ENCODE measurements at regions of chr17 and their contacts with region 1.

Region 1: DNA sequence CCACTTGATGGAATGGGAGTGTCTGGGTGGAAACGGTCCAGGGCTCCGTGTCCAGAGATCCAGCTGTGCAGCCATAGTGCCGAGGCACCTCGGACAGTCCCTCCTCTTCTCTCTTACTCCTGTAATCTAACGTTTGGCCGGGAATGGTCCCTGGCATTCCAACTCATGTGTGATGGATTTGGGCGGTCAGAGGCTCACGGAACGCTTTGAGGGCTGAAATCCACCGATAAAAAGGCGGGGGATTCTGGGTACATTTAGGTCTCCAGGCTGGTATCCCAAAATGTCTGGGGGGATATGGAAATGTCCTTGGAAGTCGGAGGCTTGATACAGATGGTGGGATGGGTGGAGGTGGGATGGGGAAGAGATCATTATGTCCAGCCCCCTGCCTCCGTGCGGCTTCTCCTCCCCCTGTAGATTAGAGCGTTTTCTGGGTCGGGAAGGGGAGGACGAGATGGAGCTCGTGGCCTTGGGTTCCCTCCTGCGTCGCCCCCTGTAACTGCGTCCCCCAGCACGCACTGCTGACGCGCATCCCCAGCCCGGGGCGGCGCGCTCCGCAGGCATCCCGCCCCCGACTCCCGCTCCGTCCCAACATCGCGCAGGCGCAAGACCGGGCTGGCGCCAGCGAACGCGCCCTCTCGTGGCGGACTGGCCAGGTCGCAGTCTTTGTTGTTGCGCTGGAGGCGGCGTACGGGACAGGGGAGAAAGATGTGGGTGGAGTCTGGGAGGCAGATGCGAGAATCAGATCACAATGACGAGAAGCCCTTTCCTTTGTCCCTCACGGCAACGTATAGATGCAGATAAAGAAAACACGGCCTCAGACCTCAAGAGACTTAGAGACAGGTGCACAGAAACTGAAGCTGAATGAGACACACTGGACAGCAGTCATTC is 4.5 kb upstream of the SGCA start:
- DNase-seq: peak; percentile 97
- H3K4me3 Mint-ChIP-seq: peak overlapping the region; percentile 75
- H3K27ac Mint-ChIP-seq: peak overlapping the region; percentile 6
- H3K4me1 Mint-ChIP-seq: peaks cover 18% of the 10 kb centered on the region
- H3K27me3 Mint-ChIP-seq: peaks cover 59% of the 10 kb centered on the region
- CTCF ChIP-seq: peak; percentile 81

Region 2: DNA sequence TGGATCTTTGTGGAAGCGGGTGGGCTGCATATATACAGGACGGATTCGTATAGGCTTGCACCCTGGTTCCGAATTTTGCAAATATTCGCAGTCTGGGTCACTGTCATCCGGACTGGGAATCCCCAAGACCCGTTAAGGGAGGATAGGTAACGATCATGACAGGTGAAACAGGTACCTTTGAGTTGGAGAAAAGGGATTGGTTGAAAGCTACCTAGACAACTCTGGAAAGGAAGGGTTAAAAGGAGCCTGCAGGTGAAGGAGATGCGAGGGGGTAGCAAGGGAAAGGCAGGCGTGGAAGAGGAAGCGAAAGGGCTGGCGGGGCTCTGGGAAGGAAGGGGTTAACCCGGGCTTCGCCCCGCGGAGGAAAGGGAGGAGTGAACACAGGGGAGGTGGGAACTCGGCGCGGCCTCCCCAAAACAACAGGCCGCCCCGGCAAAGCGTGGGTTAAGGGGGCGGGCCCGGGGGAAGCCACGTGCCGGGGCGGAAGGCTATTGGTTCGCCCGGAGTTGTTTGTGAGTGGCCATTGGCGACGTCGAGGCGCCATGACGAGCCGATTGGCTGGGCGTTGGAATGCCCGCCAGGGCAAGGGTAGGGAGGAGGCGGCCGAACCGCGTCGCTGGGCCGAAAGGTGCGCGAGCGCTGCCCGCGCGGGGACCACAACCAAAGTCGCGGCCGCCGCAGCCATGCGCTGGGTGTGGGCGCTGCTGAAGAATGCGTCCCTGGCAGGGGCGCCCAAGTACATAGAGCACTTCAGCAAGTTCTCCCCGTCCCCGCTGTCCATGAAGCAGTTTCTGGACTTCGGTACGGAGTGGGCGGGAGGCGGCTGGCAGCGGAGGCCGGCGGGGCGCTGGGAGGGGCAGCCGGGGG is 66.3 kb before region 1 on chr17 and contains the start of gene PDK2:
- CTCF ChIA-PET with region 1: interaction called, 6 read pairs
- intact Hi-C with region 1: loop called (anchors 2 kb)
- DNase-seq: peak; percentile 98
- H3K4me3 Mint-ChIP-seq: peak within 1 kb of the TSS; percentile 90
- H3K27ac Mint-ChIP-seq: peak within 1 kb of the TSS; percentile 89
- H3K4me1 Mint-ChIP-seq: peaks cover 48% of the 10 kb centered on the region
- H3K27me3 Mint-ChIP-seq: no peaks in the 10 kb centered on the region
- CTCF ChIP-seq: no peak
- total RNA-seq, gene PDK2: 29.5 and 39.1 TPM in 2 replicates

Region 3: GRCh38 chr17:50114849-50115357 is 46.4 kb before region 1 on chr17:
- CTCF ChIA-PET with region 1: interaction called, 3 read pairs
- intact Hi-C with region 1: loop called (anchors 5 kb)
- DNase-seq: peak; percentile 55
- H3K4me3 Mint-ChIP-seq: no peak overlapping the region
- H3K27ac Mint-ChIP-seq: no peak overlapping the region
- H3K4me1 Mint-ChIP-seq: no peaks in the 10 kb centered on the region
- H3K27me3 Mint-ChIP-seq: peaks cover 57% of the 10 kb centered on the region
- CTCF ChIP-seq: peak; percentile 40

Region 4: DNA sequence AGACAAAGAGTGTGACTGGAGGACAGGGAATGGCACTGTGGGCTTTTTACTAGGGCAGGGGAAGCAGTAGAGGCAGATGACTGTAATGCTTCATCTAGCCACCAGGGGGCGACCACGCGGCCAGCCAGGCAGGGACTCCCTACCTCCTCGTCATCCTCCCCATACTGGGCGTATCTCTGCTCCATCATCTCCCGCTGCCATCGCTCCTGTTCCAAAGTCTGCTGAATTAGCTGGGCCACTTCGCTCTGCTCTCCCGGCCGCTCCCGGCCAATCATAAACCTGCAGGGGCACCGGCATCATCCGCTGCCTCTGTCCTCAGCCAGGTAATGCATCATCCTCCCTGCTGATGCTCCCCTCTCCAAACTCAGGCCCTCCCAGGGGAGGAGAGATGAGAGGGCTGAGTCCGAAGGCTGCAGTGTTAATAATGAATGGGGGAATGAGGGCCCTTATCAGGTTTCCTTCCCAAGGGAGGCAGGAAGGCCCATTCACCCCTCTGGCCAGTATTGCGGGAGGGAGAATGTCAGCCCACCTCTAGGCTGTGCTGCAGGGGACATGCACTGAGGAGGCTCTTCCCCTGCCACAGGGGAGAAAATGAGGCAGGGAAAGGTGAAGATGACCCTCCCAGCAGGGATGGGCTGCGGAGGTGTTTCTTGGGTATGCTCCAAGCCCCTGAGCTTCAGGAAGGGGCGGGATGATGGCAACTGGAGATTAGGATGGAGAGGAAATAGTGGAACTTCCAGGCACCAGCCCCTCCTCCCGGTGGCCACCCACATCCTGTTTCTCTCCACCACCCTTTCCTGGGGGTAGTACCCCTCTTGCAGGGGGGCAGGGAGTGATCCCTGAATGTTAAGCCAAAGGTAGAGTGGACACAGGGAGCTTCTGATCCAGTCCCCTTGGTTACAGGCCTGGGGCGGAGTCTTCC is 21.1 kb before region 1 on chr17:
- CTCF ChIA-PET with region 1: interaction called, 10 read pairs
- intact Hi-C with region 1: no loop called
- DNase-seq: peak; percentile 89
- H3K4me3 Mint-ChIP-seq: no peak overlapping the region
- H3K27ac Mint-ChIP-seq: no peak overlapping the region
- H3K4me1 Mint-ChIP-seq: peaks cover 9% of the 10 kb centered on the region
- H3K27me3 Mint-ChIP-seq: no peaks in the 10 kb centered on the region
- CTCF ChIP-seq: peak; percentile 99

Measured in Calu3 (cell line).